ENCODE measurements at regions of chr11 and their contacts with region 1.

Region 1: DNA sequence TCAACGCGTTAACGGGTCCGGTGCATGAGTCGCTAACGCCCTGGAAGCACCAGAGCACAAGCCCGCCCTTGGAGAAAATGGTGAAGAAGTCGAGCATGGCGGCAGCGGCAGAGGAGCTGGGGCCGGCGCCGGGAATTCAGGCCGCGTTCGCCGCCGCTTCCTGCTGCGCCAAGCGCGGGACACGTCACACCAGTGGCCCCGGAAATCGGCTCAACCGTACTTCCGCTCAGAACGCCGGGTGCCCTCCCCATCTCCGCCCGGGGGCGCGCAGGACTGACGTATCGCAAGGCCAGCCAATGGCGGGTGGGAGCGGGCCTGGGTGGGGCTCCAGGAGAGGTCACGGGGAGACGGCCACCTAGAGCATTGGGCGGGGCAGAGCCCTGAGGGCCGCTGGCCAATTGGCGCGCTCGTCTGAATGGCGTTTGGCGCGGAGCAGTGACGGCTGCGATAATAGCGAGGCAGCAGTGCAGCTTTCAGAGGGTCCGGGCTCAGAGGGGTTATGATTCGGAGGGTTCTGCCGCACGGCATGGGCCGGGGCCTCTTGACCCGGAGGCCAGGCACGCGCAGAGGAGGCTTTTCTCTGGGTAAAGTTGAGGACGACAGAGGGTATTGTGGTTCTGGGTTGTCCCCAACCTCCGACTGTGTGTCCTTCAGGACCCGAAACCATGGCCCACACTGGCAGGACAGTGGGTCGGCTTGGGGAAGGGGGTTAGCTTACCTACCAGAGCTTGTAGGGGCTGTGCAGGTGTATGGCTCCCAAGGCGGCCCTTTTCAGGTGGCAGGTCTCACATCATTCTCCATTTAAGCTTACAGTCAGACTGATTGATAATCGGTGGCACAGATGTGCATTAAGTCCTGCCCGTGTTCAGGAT is at the starts of genes FOXRED1 and SRPRA:
- DNase-seq: peak; percentile 99 to 100 (median 100)
- ATAC-seq: peak; percentile 98
- H3K4me3 ChIP-seq: peak within 1 kb of the TSS; percentile 96
- H3K4me3 Mint-ChIP-seq: peak within 1 kb of the TSS; percentile 100
- H3K27ac ChIP-seq: peak within 1 kb of the TSS; percentile 71 to 95
- H3K27ac Mint-ChIP-seq: peak within 1 kb of the TSS; percentile 96
- H3K4me1 ChIP-seq: peaks cover 30% of the 10 kb centered on the region
- H3K4me1 Mint-ChIP-seq: peaks cover 38% of the 10 kb centered on the region
- H3K27me3 ChIP-seq: no peaks in the 10 kb centered on the region
- H3K27me3 Mint-ChIP-seq: no peaks in the 10 kb centered on the region
- CTCF ChIP-seq: no peak
- total RNA-seq, gene FOXRED1: 25.3 to 29.0 TPM
- total RNA-seq, gene SRPRA: 198 to 206 TPM

Region 2: DNA sequence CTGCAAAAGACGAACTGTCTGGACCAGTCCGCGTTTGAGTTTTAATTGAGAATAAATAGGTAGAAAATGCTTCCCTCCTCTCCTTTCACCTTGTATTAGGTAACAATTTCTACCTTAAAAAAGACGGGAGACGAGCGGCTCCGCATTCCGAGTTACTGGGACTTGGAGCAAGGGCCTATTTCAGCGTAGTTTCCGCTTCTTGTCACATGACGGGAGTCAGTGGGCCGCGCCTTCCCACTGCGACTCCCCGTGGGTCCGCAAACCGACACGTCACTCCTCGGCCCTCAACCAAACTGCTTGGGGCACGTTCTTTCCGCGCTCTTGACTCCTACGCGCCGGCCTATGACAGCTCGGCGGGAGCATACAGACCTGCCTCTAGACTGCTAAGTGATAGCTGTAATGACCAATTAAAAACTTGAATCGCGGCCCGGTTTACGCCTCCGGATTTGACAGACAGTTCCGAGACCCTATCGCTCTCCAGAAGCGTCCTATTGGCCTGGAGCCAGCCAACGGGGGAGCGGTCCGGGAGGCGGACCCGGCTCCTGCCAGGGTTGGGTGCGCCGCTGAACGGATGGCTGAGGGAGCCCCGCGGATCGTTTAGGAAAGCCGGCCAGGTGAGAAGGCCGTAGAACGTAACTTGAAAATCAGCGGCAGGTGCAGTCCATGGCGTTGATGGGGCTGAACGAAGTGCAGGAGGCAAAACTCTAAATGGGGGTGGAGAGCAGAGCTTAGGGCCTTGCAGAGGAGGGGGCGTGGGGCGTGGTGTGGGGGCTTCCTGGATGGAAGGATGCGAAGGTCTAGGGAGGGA is 676.4 kb before region 1 on chr11 and contains the start of gene STT3A:
- CTCF ChIA-PET with region 1: no interaction called
- POLR2A ChIA-PET with region 1: interaction called, 12 read pairs
- intact Hi-C with region 1: loop called in 1 of 2 experiments (anchors 2 kb)
- DNase-seq: peak; percentile 94 to 100 (median 97)
- ATAC-seq: peak; percentile 91
- H3K4me3 ChIP-seq: peak within 1 kb of the TSS; percentile 94
- H3K4me3 Mint-ChIP-seq: peak within 1 kb of the TSS; percentile 94
- H3K27ac ChIP-seq: peak within 1 kb of the TSS; percentile 94 to 98
- H3K27ac Mint-ChIP-seq: peak within 1 kb of the TSS; percentile 96
- H3K4me1 ChIP-seq: peaks cover 32% of the 10 kb centered on the region
- H3K4me1 Mint-ChIP-seq: peaks cover 46% of the 10 kb centered on the region
- H3K27me3 ChIP-seq: no peaks in the 10 kb centered on the region
- H3K27me3 Mint-ChIP-seq: no peaks in the 10 kb centered on the region
- CTCF ChIP-seq: no peak
- total RNA-seq, gene STT3A: 35.1 to 38.6 TPM

Region 3: DNA sequence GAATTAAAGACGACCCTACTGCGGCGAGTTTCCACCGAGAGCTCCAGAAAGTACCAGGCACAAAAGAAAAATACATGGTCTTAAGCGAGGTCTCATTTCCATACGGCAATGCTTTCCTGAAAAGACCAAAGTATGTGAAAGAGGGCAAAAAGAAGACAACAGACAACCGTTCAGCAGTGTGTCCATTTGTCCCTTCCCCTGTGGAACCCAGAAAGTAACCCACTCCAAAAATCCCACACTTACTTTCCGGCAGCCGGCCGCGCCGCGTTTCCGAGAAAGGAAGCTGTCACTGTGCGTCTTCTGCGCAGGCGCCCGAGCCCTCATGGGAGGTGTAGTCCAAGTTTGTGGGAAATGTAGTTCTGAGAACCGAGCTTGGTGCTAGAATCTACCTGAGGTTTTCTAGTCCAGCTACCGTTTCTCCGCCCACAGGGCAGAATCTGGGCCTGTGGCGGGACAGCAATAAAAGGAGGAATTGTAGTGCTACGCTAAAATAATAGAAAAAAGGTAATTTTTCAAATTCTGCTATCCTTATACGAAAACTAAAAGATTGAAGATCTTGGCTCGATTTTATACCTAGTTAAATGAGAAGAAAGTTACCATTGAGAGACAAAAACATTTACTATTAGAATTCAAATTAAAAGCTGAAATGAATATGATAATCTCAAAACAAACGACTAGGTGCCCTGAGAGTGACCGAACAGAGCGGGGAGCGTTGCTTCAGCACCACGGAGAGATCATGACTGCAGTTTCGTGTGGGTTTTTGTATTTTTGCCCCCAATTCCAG is 365.8 kb before region 1 on chr11 and contains the start of gene PUS3:
- CTCF ChIA-PET with region 1: no interaction called
- POLR2A ChIA-PET with region 1: interaction called, 5 read pairs
- intact Hi-C with region 1: loop called in 1 of 2 experiments (anchors 5 kb)
- DNase-seq: peak; percentile 75 to 92 (median 84)
- ATAC-seq: peak; percentile 93
- H3K4me3 ChIP-seq: peak within 1 kb of the TSS; percentile 86
- H3K4me3 Mint-ChIP-seq: peak within 1 kb of the TSS; percentile 95
- H3K27ac ChIP-seq: peak within 1 kb of the TSS; percentile 55
- H3K27ac Mint-ChIP-seq: peak within 1 kb of the TSS; percentile 88
- H3K4me1 ChIP-seq: peaks cover 29% of the 10 kb centered on the region
- H3K4me1 Mint-ChIP-seq: peaks cover 46% of the 10 kb centered on the region
- H3K27me3 ChIP-seq: peaks cover 9 to 27% of the 10 kb centered on the region in 2 experiments
- H3K27me3 Mint-ChIP-seq: peaks cover 41% of the 10 kb centered on the region
- CTCF ChIP-seq: no peak
- total RNA-seq, gene PUS3: 6.0 to 7.3 TPM

Region 4: DNA sequence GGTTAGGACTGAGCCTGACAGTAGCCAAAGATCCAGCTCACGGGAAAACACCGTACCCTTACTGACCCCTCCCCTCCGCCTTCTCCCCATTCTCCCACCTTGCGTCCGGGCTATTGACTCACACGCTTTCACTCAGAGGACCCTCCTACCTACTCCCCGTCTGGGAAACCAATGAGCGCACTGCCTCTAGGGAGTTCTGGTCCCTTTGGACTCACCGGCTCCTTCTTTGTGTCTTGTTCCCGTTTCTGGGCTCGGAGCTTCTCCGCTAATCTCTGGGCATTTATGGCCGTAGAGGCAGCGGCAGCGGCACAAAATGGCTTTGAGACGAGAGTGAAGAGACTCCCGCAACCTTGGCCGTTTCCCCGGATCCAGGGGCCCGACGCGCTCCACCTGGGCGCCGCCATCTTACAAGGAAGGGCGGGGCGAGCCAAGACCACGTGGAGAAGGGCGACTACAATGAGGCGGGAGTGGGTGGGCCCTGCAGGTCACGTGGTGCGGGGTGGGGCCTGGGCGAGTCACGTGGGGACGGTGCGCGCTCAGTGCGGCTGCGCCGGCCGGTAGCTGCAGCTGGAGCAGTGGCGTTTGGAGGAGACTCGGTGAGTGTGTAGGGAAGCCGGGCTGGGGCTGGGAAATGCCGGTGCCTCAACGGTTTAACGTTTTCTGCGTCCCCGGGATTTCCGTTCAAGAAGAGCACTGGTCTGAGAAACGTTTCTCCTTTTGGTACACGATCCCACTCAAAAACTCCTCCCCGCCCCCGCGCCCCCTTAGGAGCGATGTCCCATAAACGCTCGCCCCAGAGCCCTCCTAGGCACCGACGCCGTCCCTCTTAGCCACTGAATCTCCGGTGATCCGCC is 57.5 kb before region 1 on chr11 and contains the starts of genes FAM118B and RPUSD4:
- CTCF ChIA-PET with region 1: no interaction called
- POLR2A ChIA-PET with region 1: interaction called, 21 read pairs
- intact Hi-C with region 1: loop called (anchors 2 to 5 kb)
- DNase-seq: peak; percentile 96 to 100 (median 98)
- ATAC-seq: peak; percentile 97
- H3K4me3 ChIP-seq: peak within 1 kb of the TSS; percentile 99
- H3K4me3 Mint-ChIP-seq: peak within 1 kb of the TSS; percentile 100
- H3K27ac ChIP-seq: peak within 1 kb of the TSS; percentile 50 to 78
- H3K27ac Mint-ChIP-seq: peak within 1 kb of the TSS; percentile 93
- H3K4me1 ChIP-seq: peaks cover 21% of the 10 kb centered on the region
- H3K4me1 Mint-ChIP-seq: peaks cover 61% of the 10 kb centered on the region
- H3K27me3 ChIP-seq: no peaks in the 10 kb centered on the region
- H3K27me3 Mint-ChIP-seq: no peaks in the 10 kb centered on the region
- CTCF ChIP-seq: no peak
- total RNA-seq, gene FAM118B: 1.0 to 1.8 TPM
- total RNA-seq, gene RPUSD4: 33.1 to 37.6 TPM

Region 5: GRCh38 chr11:126303623-126304456 is 34.9 kb after region 1 on chr11 and contains the start of gene DCPS:
- CTCF ChIA-PET with region 1: interaction called, 4 read pairs
- POLR2A ChIA-PET with region 1: interaction called, 7 read pairs
- intact Hi-C with region 1: loop called (anchors 1 to 5 kb)
- DNase-seq: peak; percentile 71 to 93 (median 83)
- ATAC-seq: peak; percentile 98
- H3K4me3 ChIP-seq: peak within 1 kb of the TSS; percentile 91
- H3K4me3 Mint-ChIP-seq: peak within 1 kb of the TSS; percentile 87
- H3K27ac ChIP-seq: peak within 1 kb of the TSS; percentile 89 to 91
- H3K27ac Mint-ChIP-seq: peak within 1 kb of the TSS; percentile 85
- H3K4me1 ChIP-seq: peaks cover 39% of the 10 kb centered on the region
- H3K4me1 Mint-ChIP-seq: peaks cover 43% of the 10 kb centered on the region
- H3K27me3 ChIP-seq: no peaks in the 10 kb centered on the region
- H3K27me3 Mint-ChIP-seq: no peaks in the 10 kb centered on the region
- CTCF ChIP-seq: no peak
- total RNA-seq, gene DCPS: 6.2 to 6.3 TPM

Measured in CD4-positive, alpha-beta T cell (primary cell).